CD14-positive monocyte (primary cell): ENCODE measurements at regions of chr6 and their contacts with region 1.

Region 1: DNA sequence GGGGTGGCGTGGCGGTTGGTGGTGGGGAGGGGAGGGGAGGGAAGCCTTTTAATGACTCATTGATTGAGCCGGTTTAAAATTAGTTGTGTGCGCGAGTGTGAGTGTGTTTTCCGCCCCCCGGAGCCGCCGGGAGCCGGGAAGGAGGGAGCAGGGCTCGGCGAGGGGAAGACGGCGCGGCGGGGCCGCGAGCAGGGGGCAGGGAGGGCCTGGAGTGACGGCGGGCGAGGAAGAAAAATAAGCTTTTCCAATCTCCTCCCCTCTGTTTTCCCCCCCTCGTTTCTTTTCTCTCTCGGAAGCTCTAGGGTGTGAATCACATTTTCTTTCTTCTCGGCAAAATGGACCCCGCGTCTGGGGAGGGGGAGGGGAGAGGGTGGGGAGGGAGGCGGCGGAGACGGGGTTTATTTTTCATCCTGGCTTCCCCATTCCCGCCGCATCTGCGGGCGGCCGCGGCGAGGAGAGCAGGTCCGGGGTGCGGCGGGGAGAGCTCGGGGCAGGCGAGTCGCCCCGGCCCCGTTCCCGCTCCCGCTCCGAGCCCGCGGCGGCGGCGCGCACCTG is 847 bp downstream of the BICRAL start:
- DNase-seq: peak; percentile 71 to 85 (median 83)
- H3K4me3 ChIP-seq: peak overlapping the region; percentile 90 to 99 (median 97)
- H3K4me3 Mint-ChIP-seq: peak overlapping the region; percentile 88 to 96
- H3K27ac ChIP-seq: peak overlapping the region; percentile 95 to 97
- H3K27ac Mint-ChIP-seq: peak overlapping the region in 6 of 7 donors; percentile 94 to 99 (median 98)
- H3K4me1 ChIP-seq: peaks cover 29 to 43% of the 10 kb centered on the region in 2 donors
- H3K4me1 Mint-ChIP-seq: peaks cover 11% of the 10 kb centered on the region
- H3K27me3 ChIP-seq: no peaks in the 10 kb centered on the region
- H3K27me3 Mint-ChIP-seq: no peaks in the 10 kb centered on the region
- CTCF ChIP-seq: no peak

Region 2: GRCh38 chr6:41723530-41724227 is 1059.0 kb before region 1 on chr6:
- intact Hi-C with region 1: loop called in 1 of 2 experiments (anchors 5 kb)
- DNase-seq: peak; percentile 96 to 98 (median 98)
- H3K4me3 ChIP-seq: peak overlapping the region; percentile 43 to 79 (median 49)
- H3K4me3 Mint-ChIP-seq: peak overlapping the region; percentile 81 to 93
- H3K27ac ChIP-seq: peak overlapping the region; percentile 81 to 88
- H3K27ac Mint-ChIP-seq: peak overlapping the region; percentile 97 to 99 (median 98)
- H3K4me1 ChIP-seq: peaks cover 90 to 98% of the 10 kb centered on the region in 2 donors
- H3K4me1 Mint-ChIP-seq: peaks cover 92% of the 10 kb centered on the region
- H3K27me3 ChIP-seq: no peaks in the 10 kb centered on the region
- H3K27me3 Mint-ChIP-seq: peaks cover 0 to 1% (median 0%) of the 10 kb centered on the region in 3 donors
- CTCF ChIP-seq: no peak

Region 3: GRCh38 chr6:42726485-42727086 is 56.1 kb before region 1 on chr6:
- intact Hi-C with region 1: loop called in 1 of 2 experiments (anchors 10 kb)
- DNase-seq: peak; percentile 80 to 89 (median 84)
- H3K4me3 ChIP-seq: peak overlapping the region; percentile 55 to 88 (median 77)
- H3K4me3 Mint-ChIP-seq: peak overlapping the region; percentile 95 to 99
- H3K27ac ChIP-seq: peak overlapping the region in 1 of 2 donors; percentile 50
- H3K27ac Mint-ChIP-seq: peak overlapping the region in 5 of 7 donors; percentile 74 to 87 (median 84)
- H3K4me1 ChIP-seq: peaks cover 5 to 16% of the 10 kb centered on the region in 2 donors
- H3K4me1 Mint-ChIP-seq: peaks cover 18% of the 10 kb centered on the region
- H3K27me3 ChIP-seq: no peaks in the 10 kb centered on the region
- H3K27me3 Mint-ChIP-seq: peaks cover 2 to 11% (median 7%) of the 10 kb centered on the region in 3 donors
- CTCF ChIP-seq: peak; percentile 95

Region 4: GRCh38 chr6:42745707-42746462 is 36.8 kb before region 1 on chr6 and contains the start of gene TBCC:
- intact Hi-C with region 1: loop called (anchors 2 kb)
- DNase-seq: peak; percentile 97
- H3K4me3 ChIP-seq: peak within 1 kb of the TSS; percentile 83 to 99 (median 97)
- H3K4me3 Mint-ChIP-seq: peak within 1 kb of the TSS; percentile 100
- H3K27ac ChIP-seq: peak within 1 kb of the TSS; percentile 79 to 97
- H3K27ac Mint-ChIP-seq: peak within 1 kb of the TSS; percentile 95 to 100 (median 100)
- H3K4me1 ChIP-seq: peaks cover 18 to 30% of the 10 kb centered on the region in 2 donors
- H3K4me1 Mint-ChIP-seq: peaks cover 35% of the 10 kb centered on the region
- H3K27me3 ChIP-seq: no peaks in the 10 kb centered on the region
- H3K27me3 Mint-ChIP-seq: no peaks in the 10 kb centered on the region
- CTCF ChIP-seq: no peak
- polyA plus RNA-seq, gene TBCC: 19.3 to 31.3 (median 30.7) TPM

Region 5: DNA sequence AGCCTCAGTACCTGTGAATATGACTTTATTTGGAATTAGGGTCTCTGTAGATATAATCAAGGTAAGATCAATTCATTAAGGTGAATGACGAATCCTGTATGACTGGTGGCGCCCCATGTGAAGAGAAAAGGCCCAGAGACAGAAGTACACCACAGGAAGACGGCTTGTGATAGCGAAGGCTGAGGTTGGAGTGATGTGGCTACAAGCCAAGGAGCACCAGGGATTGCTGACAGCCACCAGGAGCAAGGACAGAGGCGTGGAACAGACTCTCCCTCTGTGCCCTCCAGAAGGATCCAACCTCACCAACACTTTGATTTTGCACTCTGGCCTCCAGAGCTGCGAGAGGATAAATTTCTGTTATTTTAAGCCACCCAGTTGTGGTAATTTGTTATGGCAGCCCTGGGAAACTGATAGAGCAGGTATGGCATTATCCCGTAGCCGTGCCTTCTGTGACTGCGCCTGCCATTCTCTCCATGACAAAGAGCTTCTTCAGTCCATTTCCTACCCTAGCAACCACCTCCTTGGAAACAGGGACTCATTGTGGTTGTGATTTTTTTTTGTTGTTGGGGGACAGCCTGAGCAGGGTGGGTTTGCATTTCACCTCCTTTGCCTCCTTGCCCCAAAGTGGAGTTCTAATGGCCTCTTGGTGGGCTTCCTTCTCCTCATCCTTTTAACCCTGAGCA is 323.0 kb after region 1 on chr6:
- intact Hi-C with region 1: no loop called
- DNase-seq: no peak
- H3K4me3 ChIP-seq: no peak overlapping the region
- H3K4me3 Mint-ChIP-seq: no peak overlapping the region
- H3K27ac ChIP-seq: no peak overlapping the region
- H3K27ac Mint-ChIP-seq: no peak overlapping the region
- H3K4me1 ChIP-seq: no peaks in the 10 kb centered on the region
- H3K4me1 Mint-ChIP-seq: no peaks in the 10 kb centered on the region
- H3K27me3 ChIP-seq: no peaks in the 10 kb centered on the region
- H3K27me3 Mint-ChIP-seq: peaks cover 0 to 3% (median 1%) of the 10 kb centered on the region in 3 donors
- CTCF ChIP-seq: no peak